ENCODE measurements at regions of chr5 and their contacts with region 1.

Region 1: GRCh38 chr5:96868603-96869371 is 7.5 kb upstream of the ERAP2 start:
- DNase-seq: no peak
- ATAC-seq: peak; percentile 90
- H3K4me3 Mint-ChIP-seq: no peak overlapping the region
- H3K27ac Mint-ChIP-seq: no peak overlapping the region
- H3K4me1 Mint-ChIP-seq: peaks cover 51% of the 10 kb centered on the region
- H3K27me3 Mint-ChIP-seq: no peaks in the 10 kb centered on the region

Region 2: GRCh38 chr5:96752341-96753016 is 116.3 kb before region 1 on chr5:
- CTCF ChIA-PET with region 1: interaction called, 11 read pairs
- DNase-seq: no peak
- ATAC-seq: no peak
- H3K4me3 Mint-ChIP-seq: no peak overlapping the region
- H3K27ac Mint-ChIP-seq: no peak overlapping the region
- H3K4me1 Mint-ChIP-seq: no peaks in the 10 kb centered on the region
- H3K27me3 Mint-ChIP-seq: no peaks in the 10 kb centered on the region

Region 3: DNA sequence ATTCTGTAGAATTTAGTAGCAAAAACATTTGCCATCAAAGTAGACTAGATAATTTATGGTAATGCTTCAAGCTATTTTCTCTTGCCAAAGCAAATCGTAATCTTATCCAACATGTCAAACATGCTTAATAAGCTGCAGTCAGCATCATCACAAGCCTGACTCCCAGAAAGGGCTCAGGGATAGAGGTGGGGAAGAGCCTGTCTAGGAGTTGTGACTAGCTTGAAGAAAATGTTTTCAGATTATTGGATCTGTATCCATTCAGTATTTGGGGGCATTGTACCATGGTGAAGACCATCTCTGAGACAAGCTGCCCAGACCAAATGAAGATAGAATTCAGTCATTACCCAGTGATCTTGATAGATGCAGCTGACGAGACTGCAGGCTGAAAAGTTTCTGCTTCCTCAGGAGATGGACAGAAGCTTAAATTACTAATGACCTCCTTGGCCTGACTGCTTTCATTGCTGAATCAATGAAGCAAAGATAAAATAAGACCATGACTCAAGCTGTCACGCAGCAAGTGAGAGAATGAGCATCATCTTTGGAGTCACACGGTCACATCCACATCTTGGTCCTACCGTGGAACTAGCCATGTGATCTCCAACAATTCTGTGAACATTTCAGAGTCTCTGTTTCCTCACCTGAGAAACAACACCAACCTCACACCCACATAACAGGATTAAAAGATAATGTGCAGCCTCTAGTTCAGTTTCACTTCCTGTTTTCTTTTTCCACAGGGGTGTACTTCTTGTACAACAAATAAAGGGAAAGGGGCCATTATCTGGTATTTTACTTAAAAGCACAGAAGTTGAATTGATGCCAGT is 16.9 kb after region 1 on chr5:
- CTCF ChIA-PET with region 1: interaction called, 10 read pairs
- DNase-seq: peak; percentile 61
- ATAC-seq: peak; percentile 83
- H3K4me3 Mint-ChIP-seq: peak overlapping the region; percentile 57
- H3K27ac Mint-ChIP-seq: peak overlapping the region; percentile 91
- H3K4me1 Mint-ChIP-seq: peaks cover 57% of the 10 kb centered on the region
- H3K27me3 Mint-ChIP-seq: no peaks in the 10 kb centered on the region

Region 4: DNA sequence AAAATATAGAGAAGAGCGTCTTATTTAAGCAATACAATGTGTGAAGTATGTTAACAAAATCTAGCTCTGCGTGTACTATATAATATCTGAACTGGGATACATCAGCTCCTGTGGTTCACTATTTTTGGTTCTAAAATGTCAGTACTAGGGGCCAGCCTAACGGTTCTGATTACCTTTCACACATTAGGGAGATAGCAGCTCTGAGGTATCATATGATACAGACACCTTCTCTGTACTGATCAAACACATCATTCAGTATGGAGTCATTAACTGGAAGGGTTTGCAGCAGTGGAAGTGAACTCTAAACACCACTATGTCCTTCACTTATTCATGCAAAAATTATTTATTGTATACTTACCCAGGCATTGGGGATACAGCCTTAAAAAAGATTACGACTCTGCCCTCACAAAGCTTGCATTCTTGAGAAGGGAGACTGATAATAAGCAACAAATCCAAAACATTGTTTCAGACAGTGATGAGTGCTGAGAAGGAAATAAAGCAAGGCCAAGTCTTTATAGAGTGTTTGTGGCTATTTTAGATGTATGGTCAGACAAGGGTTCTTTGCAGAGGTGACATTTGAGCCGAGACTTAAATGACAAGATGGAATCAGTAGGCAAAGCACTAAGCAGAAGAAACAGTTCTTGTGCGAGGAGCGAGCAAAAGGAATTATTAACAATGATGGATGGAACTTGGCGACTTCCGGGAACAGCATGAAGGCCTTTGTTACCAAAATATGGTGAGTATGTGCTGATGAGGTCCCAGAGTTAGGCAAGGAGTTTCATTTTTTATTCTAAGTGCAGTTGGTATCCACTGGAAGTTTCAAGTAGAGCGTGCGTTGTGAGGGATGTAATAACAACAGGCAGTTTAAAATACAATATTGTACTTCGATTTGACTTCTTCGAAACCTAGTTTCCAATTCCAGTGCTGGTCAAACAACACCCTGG is 65.2 kb after region 1 on chr5:
- CTCF ChIA-PET with region 1: interaction called, 11 read pairs
- DNase-seq: no peak
- ATAC-seq: no peak
- H3K4me3 Mint-ChIP-seq: peak overlapping the region; percentile 86
- H3K27ac Mint-ChIP-seq: peak overlapping the region; percentile 100
- H3K4me1 Mint-ChIP-seq: peaks cover 40% of the 10 kb centered on the region
- H3K27me3 Mint-ChIP-seq: no peaks in the 10 kb centered on the region

Region 5: DNA sequence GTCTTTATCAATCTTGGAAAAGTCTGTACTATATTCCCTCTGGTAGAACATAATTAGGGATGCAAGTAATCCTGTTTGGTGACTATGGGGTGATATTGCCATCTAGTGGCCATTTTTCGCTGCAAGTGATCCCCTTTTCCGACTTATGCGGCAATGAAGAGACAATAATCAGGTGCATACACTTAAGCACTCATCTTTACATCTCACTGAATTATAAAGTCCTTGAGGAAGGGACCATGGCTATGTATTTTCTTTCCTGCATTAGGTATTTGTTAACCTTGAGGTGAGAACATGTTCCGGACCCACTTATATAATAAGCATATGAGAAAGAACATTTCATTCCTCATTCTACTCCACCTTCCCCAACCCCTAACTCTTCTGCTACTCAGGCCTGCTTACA is 293.3 kb after region 1 on chr5:
- CTCF ChIA-PET with region 1: interaction called, 74 read pairs
- DNase-seq: peak; percentile 64
- ATAC-seq: peak; percentile 61
- H3K4me3 Mint-ChIP-seq: no peak overlapping the region
- H3K27ac Mint-ChIP-seq: no peak overlapping the region
- H3K4me1 Mint-ChIP-seq: peaks cover 20% of the 10 kb centered on the region
- H3K27me3 Mint-ChIP-seq: no peaks in the 10 kb centered on the region